ENCODE measurements at regions of chr11 and their contacts with region 1.

Region 1: GRCh38 chr11:64553551-64554201 is 37.3 kb upstream of the SLC22A12 start:
- DNase-seq: peak in 1 of 2 experiments; percentile 92
- H3K4me3 ChIP-seq: no peak overlapping the region
- H3K27ac ChIP-seq: no peak overlapping the region
- H3K4me1 ChIP-seq: peaks cover 0 to 8% (median 6%) of the 10 kb centered on the region in 4 experiments; a peak in 6 of 7 replicates
- H3K27me3 ChIP-seq: no peaks in the 10 kb centered on the region; a peak in 3 of 7 replicates
- CTCF ChIP-seq: peak; percentile 90 to 96 (median 90)
- EP300 ChIP-seq: no peak
- POLR2A ChIP-seq: no peak
- RAD21 ChIP-seq: peak; percentile 91 to 93

Region 2: GRCh38 chr11:64572144-64572543 is 18.5 kb after region 1 on chr11:
- CTCF ChIA-PET with region 1: no interaction called
- POLR2A ChIA-PET with region 1: no interaction called
- DNase-seq: no peak
- H3K4me3 ChIP-seq: no peak overlapping the region
- H3K27ac ChIP-seq: no peak overlapping the region
- H3K4me1 ChIP-seq: peaks cover 0 to 12% (median 7%) of the 10 kb centered on the region in 4 experiments; a peak in 6 of 7 replicates
- H3K27me3 ChIP-seq: peaks cover 0 to 3% (median 0%) of the 10 kb centered on the region in 4 experiments; a peak in 3 of 7 replicates
- CTCF ChIP-seq: no peak
- EP300 ChIP-seq: no peak
- POLR2A ChIP-seq: no peak
- RAD21 ChIP-seq: no peak

Region 3: DNA sequence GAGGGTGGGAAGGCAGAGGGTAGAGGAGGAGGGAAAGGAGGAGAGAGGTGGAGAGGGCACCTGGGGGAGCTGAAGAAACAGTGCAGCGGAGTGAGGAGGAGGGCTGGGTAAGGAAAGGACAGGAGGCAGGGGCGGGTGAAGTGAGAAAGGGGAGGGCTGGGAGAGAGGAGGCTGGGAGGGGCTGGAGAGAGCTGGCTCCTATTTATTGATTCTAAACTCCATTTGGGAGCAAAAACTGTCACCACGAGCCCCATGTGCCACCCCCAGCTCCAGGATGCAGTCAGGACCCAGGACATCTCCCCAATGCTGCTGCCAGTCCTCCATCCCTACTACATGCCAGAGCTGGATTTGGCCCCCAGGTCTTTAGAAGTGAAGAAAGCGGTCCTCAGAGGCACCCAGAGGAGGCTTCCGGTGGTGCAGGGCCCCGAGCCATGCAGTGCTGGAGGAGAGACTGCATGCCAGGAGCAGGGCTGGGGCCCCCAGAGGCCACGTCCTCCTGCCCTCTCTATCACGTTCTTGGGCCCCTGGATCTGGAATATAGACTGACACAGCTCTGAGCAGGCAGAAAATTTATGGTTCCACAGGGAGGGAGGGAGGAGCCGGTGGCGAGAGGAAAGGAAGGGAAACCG is 91.1 kb after region 1 on chr11:
- CTCF ChIA-PET with region 1: interaction called, 84 read pairs
- POLR2A ChIA-PET with region 1: interaction called, 3 read pairs
- DNase-seq: peak in 1 of 2 experiments; percentile 67
- H3K4me3 ChIP-seq: peak overlapping the region; percentile 29 to 73 (median 40); a peak in 6 of 8 replicates
- H3K27ac ChIP-seq: no peak overlapping the region
- H3K4me1 ChIP-seq: peaks cover 4 to 23% (median 11%) of the 10 kb centered on the region in 4 experiments
- H3K27me3 ChIP-seq: peaks cover 34 to 55% (median 52%) of the 10 kb centered on the region in 4 experiments
- CTCF ChIP-seq: peak in 2 of 3 experiments; percentile 37 to 43; a peak in 3 of 4 replicates
- EP300 ChIP-seq: no peak
- POLR2A ChIP-seq: no peak
- RAD21 ChIP-seq: peak; percentile 55 to 63